Activated T-helper 1 cell treated with anti-CD3 and anti-CD28 coated beads, Interleukin-12 subunit alpha, Interleukin-12 subunit beta, Interleukin-2, Interleukin-4 antibody, amounts not matched to agents 30 ng/mL and 10 ng/mL and 1 ng/mL, durations not matched to agents 14 hours and 24 hours and 36 hours (primary cell): ENCODE measurements at regions of chr17 and their contacts with region 1.

Region 1: GRCh38 chr17:16285957-16286640 is 67.2 kb downstream of the CENPV start:
- DNase-seq: peak; percentile 75
- H3K4me3 Mint-ChIP-seq: peak overlapping the region; percentile 73
- H3K27ac Mint-ChIP-seq: peak overlapping the region; percentile 99
- H3K4me1 Mint-ChIP-seq: peaks cover 48% of the 10 kb centered on the region
- H3K27me3 Mint-ChIP-seq: no peaks in the 10 kb centered on the region

Region 2: DNA sequence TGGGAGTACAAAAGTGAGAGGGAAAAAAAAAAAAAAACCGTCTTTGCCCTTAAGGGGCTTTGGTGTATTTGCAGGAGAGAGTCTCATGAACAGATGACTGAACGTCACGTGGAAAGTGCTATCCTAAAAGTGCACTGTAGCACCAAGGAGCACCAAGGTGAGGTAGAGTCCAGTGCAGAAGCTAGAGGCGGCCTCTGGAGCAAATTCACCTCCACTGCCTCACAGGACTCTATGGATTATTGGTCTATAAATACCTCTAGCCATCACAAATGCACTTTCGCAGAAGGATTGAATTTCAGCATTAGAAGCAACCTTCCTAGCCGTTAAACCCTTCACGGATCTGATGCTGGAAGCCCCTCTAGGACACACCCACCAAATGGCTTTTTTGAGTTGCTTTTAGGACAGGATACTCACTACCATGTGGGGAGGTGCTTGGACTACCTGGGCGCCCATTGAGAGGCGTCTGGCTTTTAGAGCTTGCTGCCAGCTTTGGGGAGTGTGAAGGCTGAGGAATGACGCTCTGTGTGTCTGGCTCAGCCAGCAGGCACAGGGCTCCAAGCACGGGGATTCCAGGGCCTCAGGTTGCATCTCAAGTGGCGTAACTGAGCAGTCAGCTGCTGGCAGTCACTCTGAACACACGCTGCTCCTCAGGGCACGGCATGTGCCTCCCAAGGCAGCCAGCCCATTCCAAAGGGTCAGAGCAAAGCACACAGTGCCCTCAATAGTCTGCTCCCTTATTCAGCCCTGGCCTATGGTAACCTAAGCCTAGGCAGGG is 871.4 kb before region 1 on chr17:
- intact Hi-C with region 1: no loop called
- DNase-seq: no peak
- H3K4me3 Mint-ChIP-seq: no peak overlapping the region
- H3K27ac Mint-ChIP-seq: no peak overlapping the region
- H3K4me1 Mint-ChIP-seq: no peaks in the 10 kb centered on the region
- H3K27me3 Mint-ChIP-seq: no peaks in the 10 kb centered on the region

Region 3: DNA sequence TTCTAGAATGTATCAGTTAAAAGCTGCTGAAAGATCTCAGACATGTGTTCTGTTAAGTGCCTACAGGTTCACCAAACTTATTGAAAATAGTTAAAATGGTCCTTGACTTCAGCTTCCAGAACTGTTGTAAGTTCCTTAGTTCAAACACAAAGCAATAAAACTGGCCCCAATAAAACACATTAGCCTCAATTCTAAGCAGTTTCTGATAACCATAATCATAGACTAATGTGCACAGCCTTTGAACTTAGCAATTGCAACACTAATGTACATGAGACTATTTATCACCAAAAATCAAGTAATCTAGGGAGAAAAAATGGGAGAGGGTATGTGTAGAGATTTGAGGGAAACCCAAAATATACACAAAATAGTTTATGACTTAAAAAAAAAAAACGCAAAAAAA is 53.7 kb before region 1 on chr17:
- intact Hi-C with region 1: loop called (anchors 1 kb)
- DNase-seq: no peak
- H3K4me3 Mint-ChIP-seq: no peak overlapping the region
- H3K27ac Mint-ChIP-seq: no peak overlapping the region
- H3K4me1 Mint-ChIP-seq: peaks cover 21% of the 10 kb centered on the region
- H3K27me3 Mint-ChIP-seq: no peaks in the 10 kb centered on the region

Region 4: DNA sequence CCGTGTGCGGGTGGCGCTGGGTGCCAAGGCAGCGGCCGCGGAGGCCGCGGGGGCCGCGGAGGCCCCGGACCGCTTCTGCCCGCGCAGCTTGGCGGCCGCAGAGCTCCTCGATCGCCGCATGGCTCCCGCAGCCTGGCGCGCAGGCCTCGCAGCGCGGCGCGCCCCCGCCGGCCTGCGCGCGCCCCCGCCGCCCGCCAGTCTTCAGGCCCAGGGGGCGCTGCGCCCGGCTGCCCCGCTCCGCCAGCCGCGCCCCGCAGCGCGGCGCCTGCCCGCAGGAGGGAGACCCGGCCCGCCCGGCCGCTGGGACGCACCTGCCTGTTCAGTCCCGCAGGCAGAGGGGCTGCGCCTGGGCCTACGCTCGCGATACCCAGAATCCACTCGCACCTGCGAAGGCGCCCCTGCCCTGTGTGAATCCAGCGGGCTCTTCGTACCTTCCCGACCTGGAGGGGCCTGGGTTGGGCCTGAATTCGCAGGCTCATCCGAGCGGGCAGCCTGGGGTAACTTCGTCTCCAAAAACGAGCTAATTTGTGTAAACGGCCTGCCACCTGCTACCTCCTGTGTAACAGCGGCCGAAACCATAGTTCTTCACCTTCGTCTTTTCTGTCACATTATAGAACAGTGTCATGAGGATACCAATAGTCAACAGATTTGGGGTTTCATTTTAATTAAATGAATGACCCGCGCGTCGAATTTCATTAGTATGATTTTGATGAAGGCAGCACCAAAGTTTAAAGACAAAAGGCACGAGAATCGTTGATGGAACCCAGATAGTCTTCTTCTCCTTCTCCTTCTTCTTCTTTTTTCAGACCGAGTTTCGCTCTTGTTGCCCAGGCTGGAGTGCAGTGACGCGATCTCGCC is 67.4 kb after region 1 on chr17 and contains the start of gene CENPV:
- intact Hi-C with region 1: loop called (anchors 2 kb)
- DNase-seq: peak; percentile 49
- H3K4me3 Mint-ChIP-seq: peak within 1 kb of the TSS; percentile 95
- H3K27ac Mint-ChIP-seq: peak within 1 kb of the TSS; percentile 77
- H3K4me1 Mint-ChIP-seq: peaks cover 16% of the 10 kb centered on the region
- H3K27me3 Mint-ChIP-seq: peaks cover 22% of the 10 kb centered on the region
- total RNA-seq, gene CENPV: 47.1 and 54.7 TPM in 2 replicates

Region 5: DNA sequence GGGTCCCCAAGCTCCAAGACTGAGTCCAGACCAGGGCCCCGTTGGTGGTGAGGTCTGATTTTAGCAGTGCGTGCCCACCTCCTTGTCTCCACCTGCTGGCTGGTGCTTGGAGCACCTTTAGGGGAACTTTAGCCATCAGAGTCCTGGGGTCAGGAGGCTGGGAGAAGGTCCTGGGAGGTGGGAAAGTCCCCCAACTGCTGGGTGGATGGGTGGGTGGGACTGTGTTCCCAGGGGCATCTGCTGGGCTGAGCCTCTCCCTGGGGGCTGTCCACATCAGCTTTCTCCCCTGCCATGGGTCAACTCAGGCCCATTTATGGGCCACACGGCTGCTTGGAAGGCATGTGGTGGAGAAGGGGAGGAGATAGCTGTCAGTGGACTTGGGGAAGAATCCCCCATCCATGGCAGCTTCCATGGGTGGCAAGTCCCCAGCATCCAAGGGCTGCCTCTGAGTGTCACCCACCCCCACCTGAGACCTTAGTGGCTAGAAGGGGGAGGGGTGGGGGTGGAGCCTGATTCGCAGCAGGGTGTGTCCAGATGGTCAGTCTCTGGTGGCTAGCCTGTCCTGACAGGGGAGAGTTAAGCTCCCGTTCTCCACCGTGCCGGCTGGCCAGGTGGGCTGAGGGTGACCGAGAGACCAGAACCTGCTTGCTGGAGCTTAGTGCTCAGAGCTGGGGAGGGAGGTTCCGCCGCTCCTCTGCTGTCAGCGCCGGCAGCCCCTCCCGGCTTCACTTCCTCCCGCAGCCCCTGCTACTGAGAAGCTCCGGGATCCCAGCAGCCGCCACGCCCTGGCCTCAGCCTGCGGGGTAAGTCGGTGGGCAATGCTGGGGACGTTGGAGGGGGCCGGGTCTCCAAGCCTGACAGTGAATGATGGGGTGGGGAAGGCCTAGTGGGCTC is 129.2 kb after region 1 on chr17 and contains the start of gene TRPV2:
- intact Hi-C with region 1: loop called (anchors 2 kb)
- DNase-seq: peak; percentile 37
- H3K4me3 Mint-ChIP-seq: peak within 1 kb of the TSS; percentile 96
- H3K27ac Mint-ChIP-seq: peak within 1 kb of the TSS; percentile 99
- H3K4me1 Mint-ChIP-seq: peaks cover 43% of the 10 kb centered on the region
- H3K27me3 Mint-ChIP-seq: no peaks in the 10 kb centered on the region
- total RNA-seq, gene TRPV2: 38.2 and 42.2 TPM in 2 replicates

Region 6: DNA sequence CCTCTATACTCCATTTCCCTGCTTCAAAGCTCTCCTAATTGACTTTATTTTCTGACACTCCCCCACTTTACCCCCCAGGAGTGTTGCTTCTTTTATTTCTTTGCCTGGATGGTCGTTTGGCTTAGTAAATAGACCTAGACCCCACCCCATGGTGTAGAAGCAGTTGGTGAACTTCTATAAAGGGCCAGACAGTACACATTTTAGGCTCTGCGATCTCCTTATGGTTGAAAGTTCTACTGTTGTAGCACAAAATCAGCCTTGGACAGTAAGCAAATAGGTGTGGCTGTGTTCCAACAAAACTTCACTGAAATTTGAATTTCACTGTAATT is 251.0 kb after region 1 on chr17:
- intact Hi-C with region 1: loop called (anchors 5 kb)
- DNase-seq: no peak
- H3K4me3 Mint-ChIP-seq: peak overlapping the region; percentile 91
- H3K27ac Mint-ChIP-seq: peak overlapping the region; percentile 52
- H3K4me1 Mint-ChIP-seq: peaks cover 16% of the 10 kb centered on the region
- H3K27me3 Mint-ChIP-seq: no peaks in the 10 kb centered on the region